Activated naive CD4-positive, alpha-beta T cell treated with anti-CD3 and anti-CD28 coated beads for 36 hours (primary cell): ENCODE measurements at regions of chr19 and their contacts with region 1.

Region 1: GRCh38 chr19:58154679-58155648 is 4.4 kb upstream of the ZNF329 start:
- DNase-seq: peak; percentile 97
- H3K4me3 Mint-ChIP-seq: peak overlapping the region; percentile 73
- H3K27ac Mint-ChIP-seq: no peak overlapping the region
- H3K4me1 Mint-ChIP-seq: peaks cover 17% of the 10 kb centered on the region
- H3K27me3 Mint-ChIP-seq: no peaks in the 10 kb centered on the region

Region 2: DNA sequence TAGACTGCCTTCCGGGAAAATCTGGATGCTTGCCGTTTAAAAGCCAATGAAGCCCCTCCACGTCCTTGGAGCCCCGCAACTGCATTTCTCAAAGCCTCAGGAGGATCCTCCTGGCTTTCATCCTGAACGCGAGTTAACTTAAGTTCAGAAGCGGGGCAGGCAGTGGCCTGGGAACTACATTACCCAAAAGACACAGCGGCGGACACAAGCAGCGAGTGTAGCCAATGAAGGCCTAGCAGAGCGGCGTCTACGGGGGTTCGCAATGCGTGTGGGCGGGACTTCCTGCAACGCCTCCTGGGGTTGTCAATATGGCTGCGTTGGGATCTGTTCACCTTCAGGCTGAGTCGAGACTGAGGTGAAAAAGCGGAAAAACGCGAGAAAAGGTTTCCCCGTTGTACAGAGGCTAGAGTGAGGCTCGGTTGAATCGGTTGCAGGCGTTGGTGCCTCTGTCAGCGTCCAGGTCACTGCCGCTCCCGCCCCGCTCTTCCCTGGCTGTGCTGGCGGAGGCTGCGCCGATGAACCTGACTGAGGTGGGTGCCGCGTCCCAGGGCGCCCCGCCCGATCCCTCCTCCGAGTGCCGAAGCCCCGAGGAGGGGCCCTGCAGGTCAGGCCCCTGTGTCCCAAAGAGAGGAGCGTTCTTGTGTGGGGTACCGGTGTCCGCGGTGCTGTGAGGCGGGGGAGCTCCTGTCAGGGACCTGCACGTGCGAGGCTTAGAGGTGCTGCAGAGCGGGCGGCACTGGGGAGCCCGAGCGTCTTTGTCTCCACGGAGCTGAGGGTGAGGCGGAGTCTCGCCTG is 743.9 kb before region 1 on chr19 and contains the start of gene ZNF17:
- CTCF ChIA-PET with region 1: no interaction called
- intact Hi-C with region 1: loop called (anchors 1 kb)
- DNase-seq: peak; percentile 96
- H3K4me3 Mint-ChIP-seq: peak within 1 kb of the TSS; percentile 92
- H3K27ac Mint-ChIP-seq: peak within 1 kb of the TSS; percentile 56
- H3K4me1 Mint-ChIP-seq: peaks cover 19% of the 10 kb centered on the region
- H3K27me3 Mint-ChIP-seq: no peaks in the 10 kb centered on the region
- total RNA-seq, gene ZNF17: 4.6 to 6.3 TPM

Region 3: DNA sequence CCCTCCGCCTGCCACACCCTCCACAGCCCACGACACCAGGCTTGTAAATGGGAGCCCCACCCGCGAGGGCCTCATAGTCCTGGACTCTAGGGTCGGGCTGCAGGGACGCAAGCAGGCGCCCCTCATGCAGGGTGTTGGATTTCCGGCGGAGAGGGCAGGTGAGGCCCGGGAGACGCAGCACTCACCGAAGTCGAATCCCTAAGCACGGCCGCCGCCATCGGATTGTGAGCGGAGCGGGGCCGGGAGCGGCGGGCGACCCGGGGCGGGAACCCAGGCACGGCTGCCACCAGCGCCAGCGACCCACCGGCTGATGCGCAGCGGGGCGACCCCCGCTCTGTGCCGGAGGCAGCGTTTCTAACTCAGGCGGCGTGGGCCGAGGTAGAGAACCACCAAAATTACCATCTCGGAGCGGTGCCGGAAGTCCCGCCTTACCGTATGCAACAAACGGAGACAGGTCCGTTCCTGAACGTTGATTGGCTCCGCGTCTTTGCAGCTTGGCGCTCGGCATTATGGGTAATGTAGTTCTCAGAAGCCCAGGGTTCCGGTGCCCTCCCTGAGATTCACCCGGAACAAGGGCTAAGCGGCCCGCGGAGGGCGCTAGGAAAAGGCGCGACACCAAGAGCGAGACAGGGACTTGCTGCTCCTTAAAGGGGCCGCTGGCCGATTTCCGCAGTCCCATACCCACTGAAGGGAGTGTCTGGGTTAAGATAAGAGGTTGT is 576.3 kb before region 1 on chr19 and contains the start of gene ZNF416:
- CTCF ChIA-PET with region 1: no interaction called
- intact Hi-C with region 1: loop called (anchors 2 kb)
- DNase-seq: peak; percentile 98
- H3K4me3 Mint-ChIP-seq: peak within 1 kb of the TSS; percentile 75
- H3K27ac Mint-ChIP-seq: peak within 1 kb of the TSS; percentile 84
- H3K4me1 Mint-ChIP-seq: peaks cover 22% of the 10 kb centered on the region
- H3K27me3 Mint-ChIP-seq: no peaks in the 10 kb centered on the region
- total RNA-seq, gene ZNF416: 1.5 to 2.0 TPM

Region 4: GRCh38 chr19:57819475-57820148 is 335.4 kb before region 1 on chr19:
- CTCF ChIA-PET with region 1: no interaction called
- intact Hi-C with region 1: loop called (anchors 10 kb)
- DNase-seq: peak; percentile 89
- H3K4me3 Mint-ChIP-seq: peak overlapping the region; percentile 99
- H3K27ac Mint-ChIP-seq: peak overlapping the region; percentile 96
- H3K4me1 Mint-ChIP-seq: peaks cover 50% of the 10 kb centered on the region
- H3K27me3 Mint-ChIP-seq: no peaks in the 10 kb centered on the region

Region 5: GRCh38 chr19:58002384-58003173 is 152.4 kb before region 1 on chr19 and contains the start of gene ZNF606:
- CTCF ChIA-PET with region 1: no interaction called
- intact Hi-C with region 1: loop called (anchors 1 kb)
- DNase-seq: peak; percentile 86
- H3K4me3 Mint-ChIP-seq: peak within 1 kb of the TSS; percentile 81
- H3K27ac Mint-ChIP-seq: peak within 1 kb of the TSS; percentile 79
- H3K4me1 Mint-ChIP-seq: peaks cover 29% of the 10 kb centered on the region
- H3K27me3 Mint-ChIP-seq: no peaks in the 10 kb centered on the region
- total RNA-seq, gene ZNF606: 4.5 to 4.7 TPM

Region 6: DNA sequence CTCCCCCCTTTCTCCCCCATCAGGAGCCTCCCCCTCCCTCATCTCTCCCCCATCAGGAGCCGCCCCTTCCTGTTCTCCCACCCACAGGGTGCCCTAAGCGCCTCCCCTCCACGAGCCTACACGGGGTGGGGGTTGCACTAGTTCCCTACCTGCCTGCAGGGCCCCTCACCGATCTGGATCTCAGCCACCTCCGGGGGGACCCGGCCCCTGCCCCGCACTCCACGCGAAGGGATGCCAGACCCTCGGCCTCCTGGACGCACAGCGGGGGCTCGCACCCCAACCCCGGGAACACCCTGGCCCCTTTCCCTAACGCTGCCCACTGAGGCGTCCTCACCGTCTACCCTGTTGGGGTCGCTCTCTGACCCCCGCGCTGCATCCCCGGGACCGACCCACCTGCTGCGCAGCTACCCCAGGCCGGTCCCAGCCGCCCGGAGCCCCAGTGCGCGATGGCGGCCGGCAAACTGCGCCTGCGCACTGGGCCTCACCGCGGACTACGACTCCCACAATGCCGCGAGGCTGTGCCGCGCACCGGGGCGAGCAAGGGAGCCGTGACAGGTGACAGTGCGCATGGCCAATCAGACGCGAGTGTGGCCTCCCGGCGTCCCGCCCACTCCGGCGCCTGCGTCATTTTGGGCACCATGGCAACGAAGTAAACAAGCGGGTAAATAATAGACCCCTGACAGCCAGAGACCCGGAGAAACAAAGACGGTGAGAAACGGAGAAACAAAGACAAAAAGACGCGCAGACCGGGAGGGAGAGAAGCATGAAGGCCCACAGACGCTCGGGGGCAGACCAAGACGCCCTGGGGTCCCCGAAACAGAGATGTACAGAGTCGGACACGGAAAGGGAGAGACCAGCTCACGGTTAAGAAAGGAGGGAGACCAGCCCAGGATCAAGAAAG is 56.9 kb before region 1 on chr19 and contains the start of gene ZSCAN18:
- CTCF ChIA-PET with region 1: no interaction called
- intact Hi-C with region 1: loop called (anchors 2 kb)
- DNase-seq: peak; percentile 95
- H3K4me3 Mint-ChIP-seq: peak within 1 kb of the TSS; percentile 85
- H3K27ac Mint-ChIP-seq: peak within 1 kb of the TSS; percentile 93
- H3K4me1 Mint-ChIP-seq: peaks cover 14% of the 10 kb centered on the region
- H3K27me3 Mint-ChIP-seq: no peaks in the 10 kb centered on the region
- total RNA-seq, gene ZSCAN18: 25.7 to 26.1 TPM

Region 7: GRCh38 chr19:58261968-58262921 is 107.3 kb after region 1 on chr19:
- CTCF ChIA-PET with region 1: no interaction called
- intact Hi-C with region 1: no loop called
- DNase-seq: no peak
- H3K4me3 Mint-ChIP-seq: no peak overlapping the region
- H3K27ac Mint-ChIP-seq: no peak overlapping the region
- H3K4me1 Mint-ChIP-seq: no peaks in the 10 kb centered on the region
- H3K27me3 Mint-ChIP-seq: no peaks in the 10 kb centered on the region